Head of caudate nucleus (tissue), 42 donors: ENCODE measurements at regions of chr7 and their contacts with region 1.

Region 1: GRCh38 chr7:124162667-124163066 is 129.8 kb upstream of the TMEM229A start:
- DNase-seq: no peak

Region 2: GRCh38 chr7:124369310-124369709 is 206.6 kb after region 1 on chr7:
- intact Hi-C with region 1: no loop called
- DNase-seq: no peak

Region 3: DNA sequence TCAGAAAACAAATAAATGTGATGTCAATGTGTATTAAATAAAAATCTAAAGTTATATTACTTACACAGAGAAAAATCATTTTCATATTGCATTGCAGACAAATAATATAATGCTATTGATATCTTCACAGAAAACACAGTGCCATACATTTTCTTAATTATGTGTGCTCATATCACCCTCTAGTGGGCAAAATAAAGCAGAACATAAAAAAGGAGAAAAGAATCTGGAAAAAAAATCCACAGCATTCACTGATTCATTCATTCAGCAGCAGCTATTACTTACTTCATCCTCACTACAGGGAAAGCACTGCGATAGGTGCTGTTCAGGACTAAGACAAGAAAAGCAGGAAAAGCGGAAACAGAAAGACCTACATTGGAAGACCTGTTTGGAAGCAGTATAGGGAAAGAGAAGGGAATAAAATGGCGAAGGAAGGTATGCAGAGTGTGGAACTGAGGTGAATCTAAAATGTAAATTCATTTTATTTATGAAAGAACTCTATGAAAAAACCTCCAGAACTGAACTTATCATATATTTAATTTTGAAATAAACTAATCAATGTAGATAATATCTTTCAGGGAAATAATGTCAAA is 693.7 kb after region 1 on chr7:
- intact Hi-C with region 1: loop called (anchors 10 kb)
- DNase-seq: peak in 1 of 42 donors; percentile 2